ENCODE measurements at regions of chr6 and their contacts with region 1.

Region 1: DNA sequence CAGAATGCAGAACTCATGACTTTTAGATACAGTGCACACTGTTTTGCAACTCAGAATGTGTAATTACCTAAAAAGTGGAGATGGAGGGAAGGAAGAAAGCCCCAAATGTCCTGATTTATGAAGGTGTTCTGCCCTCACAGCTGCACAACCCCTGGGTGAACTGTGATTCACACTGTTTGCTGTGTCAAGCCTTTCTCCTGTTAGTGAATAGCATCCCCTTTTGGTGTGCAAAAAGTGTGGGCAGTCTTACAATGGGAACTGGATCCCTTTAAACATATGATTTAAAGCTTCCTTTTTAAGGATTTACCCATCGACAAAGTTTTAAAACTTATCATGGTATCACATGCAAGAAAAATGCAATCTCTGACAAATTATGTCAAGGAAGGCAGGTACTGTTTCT is 633.4 kb upstream of the EPHA7 start:
- DNase-seq: no peak
- H3K4me3 ChIP-seq: no peak overlapping the region
- H3K27ac ChIP-seq: no peak overlapping the region
- H3K4me1 ChIP-seq: peaks cover 0 to 11% (median 6%) of the 10 kb centered on the region in 4 experiments; a peak in 4 of 7 replicates
- H3K27me3 ChIP-seq: no peaks in the 10 kb centered on the region
- CTCF ChIP-seq: peak in 2 of 3 experiments; percentile 40 to 47; a peak in 3 of 4 replicates
- EP300 ChIP-seq: no peak
- POLR2A ChIP-seq: no peak
- RAD21 ChIP-seq: peak; percentile 79 to 80

Region 2: GRCh38 chr6:93721385-93722048 is 331.2 kb before region 1 on chr6:
- CTCF ChIA-PET with region 1: interaction called, 10 read pairs
- POLR2A ChIA-PET with region 1: no interaction called
- DNase-seq: peak; percentile 25 to 52
- H3K4me3 ChIP-seq: no peak overlapping the region
- H3K27ac ChIP-seq: no peak overlapping the region
- H3K4me1 ChIP-seq: peaks cover 0 to 4% (median 0%) of the 10 kb centered on the region in 4 experiments; a peak in 1 of 7 replicates
- H3K27me3 ChIP-seq: no peaks in the 10 kb centered on the region
- CTCF ChIP-seq: peak; percentile 7 to 90 (median 73)
- EP300 ChIP-seq: no peak
- POLR2A ChIP-seq: no peak
- RAD21 ChIP-seq: peak; percentile 99